Naive thymus-derived CD4-positive, alpha-beta T cell (primary cell): ENCODE measurements at regions of chr9 and their contacts with region 1.

Region 1: GRCh38 chr9:94672811-94673487 is 33.6 kb upstream of the FBP1 start:
- DNase-seq: no peak
- ATAC-seq: no peak
- H3K4me3 ChIP-seq: no peak overlapping the region
- H3K4me3 Mint-ChIP-seq: no peak overlapping the region
- H3K27ac ChIP-seq: no peak overlapping the region
- H3K27ac Mint-ChIP-seq: no peak overlapping the region
- H3K4me1 ChIP-seq: no peaks in the 10 kb centered on the region
- H3K4me1 Mint-ChIP-seq: peaks cover 0 to 14% (median 3%) of the 10 kb centered on the region in 7 donors
- H3K27me3 ChIP-seq: no peaks in the 10 kb centered on the region
- H3K27me3 Mint-ChIP-seq: peaks cover 0 to 26% (median 4%) of the 10 kb centered on the region in 5 donors

Region 2: DNA sequence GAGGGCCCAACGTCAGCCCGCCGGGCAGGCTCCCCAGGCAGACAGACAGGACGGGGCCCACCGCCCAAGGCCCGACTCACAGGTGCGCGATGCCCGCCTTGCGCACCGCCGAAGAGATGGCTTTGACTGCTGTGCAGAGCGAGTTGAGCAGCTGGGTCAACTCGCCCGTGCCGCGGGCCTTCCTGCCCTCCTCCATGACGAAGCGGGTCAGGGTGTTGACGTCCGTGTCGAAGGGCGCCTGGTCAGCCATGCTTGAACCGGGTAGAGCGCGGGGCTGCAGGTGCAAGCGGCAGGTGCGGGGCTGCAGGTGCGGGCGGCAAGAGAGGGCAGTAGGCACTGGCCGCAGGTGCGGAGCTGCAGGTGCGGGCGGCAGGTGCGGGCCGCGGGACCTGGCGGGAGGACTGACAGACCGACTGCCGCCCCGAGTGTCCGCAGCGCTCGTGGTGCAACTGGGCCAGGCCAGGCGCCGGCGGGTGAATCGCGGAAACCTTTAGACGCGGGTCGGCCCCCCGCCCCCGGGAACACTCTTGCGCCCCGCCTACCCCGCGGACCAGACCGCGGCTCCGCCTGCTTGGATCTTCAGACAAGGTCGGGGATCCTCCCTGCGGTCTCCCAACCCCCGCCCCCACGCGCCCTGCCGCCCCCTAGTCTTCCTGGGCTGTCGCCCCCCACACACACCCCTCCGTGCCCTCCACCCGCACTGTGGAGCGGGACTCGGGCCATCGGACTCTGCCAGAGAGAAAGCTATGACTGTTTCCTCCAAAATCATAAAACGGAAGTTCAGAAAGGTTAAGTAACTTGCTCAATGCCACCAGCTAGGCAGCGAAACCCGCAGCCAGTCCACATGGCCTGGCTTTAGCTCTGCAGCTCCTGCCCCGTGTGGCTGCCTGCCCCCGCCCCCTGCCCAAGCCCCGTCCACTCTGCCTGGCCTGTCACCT is 33.6 kb before region 1 on chr9 and contains the start of gene FBP1:
- CTCF ChIA-PET with region 1: no interaction called
- POLR2A ChIA-PET with region 1: no interaction called
- intact Hi-C with region 1: loop called in 1 of 2 experiments (anchors 1 kb)
- DNase-seq: peak; percentile 20 to 50 (median 39)
- ATAC-seq: peak; percentile 75
- H3K4me3 ChIP-seq: peak within 1 kb of the TSS; percentile 69
- H3K4me3 Mint-ChIP-seq: peak within 1 kb of the TSS; percentile 87 to 98 (median 96)
- H3K27ac ChIP-seq: peak within 1 kb of the TSS; percentile 59
- H3K27ac Mint-ChIP-seq: peak within 1 kb of the TSS; percentile 66 to 95 (median 92)
- H3K4me1 ChIP-seq: no peaks in the 10 kb centered on the region
- H3K4me1 Mint-ChIP-seq: peaks cover 13 to 23% (median 17%) of the 10 kb centered on the region in 7 donors
- H3K27me3 ChIP-seq: no peaks in the 10 kb centered on the region
- H3K27me3 Mint-ChIP-seq: peaks cover 0 to 42% (median 0%) of the 10 kb centered on the region in 5 donors
- total RNA-seq, gene FBP1: 0.15 to 26.1 (median 10.5) TPM

Region 3: DNA sequence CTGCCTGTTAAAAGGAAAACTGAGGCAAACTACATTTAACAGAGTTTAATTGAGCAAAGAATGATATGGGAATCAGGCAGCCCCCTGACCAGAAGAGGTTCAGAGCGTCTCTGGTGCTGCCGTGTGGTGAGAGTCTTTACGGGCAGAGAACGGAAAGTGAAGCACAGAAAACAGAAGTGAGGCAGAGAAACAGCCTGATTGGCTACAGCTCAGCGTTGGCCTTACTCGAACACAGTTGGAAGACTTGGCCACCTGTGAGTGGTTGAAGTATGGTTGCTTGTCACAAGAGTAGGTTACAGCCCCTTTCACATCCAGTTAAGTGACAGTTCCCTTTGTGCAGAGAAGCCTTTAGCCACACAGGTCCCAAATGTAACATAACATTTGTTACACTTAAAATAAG is 16.7 kb before region 1 on chr9:
- CTCF ChIA-PET with region 1: interaction called, 20 read pairs
- POLR2A ChIA-PET with region 1: interaction called, 13 read pairs
- intact Hi-C with region 1: loop called in 1 of 2 experiments (anchors 1 kb)
- DNase-seq: peak in 8 of 9 donors; percentile 28 to 73 (median 60)
- ATAC-seq: peak; percentile 89
- H3K4me3 ChIP-seq: peak overlapping the region; percentile 49
- H3K4me3 Mint-ChIP-seq: peak overlapping the region; percentile 76 to 92 (median 83)
- H3K27ac ChIP-seq: peak overlapping the region; percentile 66
- H3K27ac Mint-ChIP-seq: peak overlapping the region; percentile 84 to 96 (median 92)
- H3K4me1 ChIP-seq: peaks cover 0 to 15% of the 10 kb centered on the region in 2 donors
- H3K4me1 Mint-ChIP-seq: peaks cover 10 to 31% (median 28%) of the 10 kb centered on the region in 7 donors
- H3K27me3 ChIP-seq: no peaks in the 10 kb centered on the region
- H3K27me3 Mint-ChIP-seq: peaks cover 0 to 6% (median 0%) of the 10 kb centered on the region in 5 donors

Region 4: GRCh38 chr9:94734054-94734754 is 61.3 kb after region 1 on chr9:
- CTCF ChIA-PET with region 1: no interaction called
- POLR2A ChIA-PET with region 1: no interaction called
- intact Hi-C with region 1: no loop called
- DNase-seq: no peak
- ATAC-seq: no peak
- H3K4me3 ChIP-seq: no peak overlapping the region
- H3K4me3 Mint-ChIP-seq: no peak overlapping the region
- H3K27ac ChIP-seq: no peak overlapping the region
- H3K27ac Mint-ChIP-seq: no peak overlapping the region
- H3K4me1 ChIP-seq: no peaks in the 10 kb centered on the region
- H3K4me1 Mint-ChIP-seq: peaks cover 0 to 11% (median 3%) of the 10 kb centered on the region in 7 donors
- H3K27me3 ChIP-seq: no peaks in the 10 kb centered on the region
- H3K27me3 Mint-ChIP-seq: no peaks in the 10 kb centered on the region